Ascending aorta (tissue), 2 donors: ENCODE measurements at regions of chr10 and their contacts with region 1.

Region 1: GRCh38 chr10:27504007-27504807 is at the start of gene RAB18:
- DNase-seq: peak; percentile 92 to 99
- H3K4me3 ChIP-seq: peak within 1 kb of the TSS; percentile 73 to 96
- H3K27ac ChIP-seq: peak within 1 kb of the TSS; percentile 91 to 93
- H3K4me1 ChIP-seq: peaks cover 4 to 19% of the 10 kb centered on the region in 2 donors
- H3K27me3 ChIP-seq: no peaks in the 10 kb centered on the region
- CTCF ChIP-seq: peak in 1 of 3 experiments; percentile 7
- total RNA-seq, gene RAB18: 8.3 TPM

Region 2: DNA sequence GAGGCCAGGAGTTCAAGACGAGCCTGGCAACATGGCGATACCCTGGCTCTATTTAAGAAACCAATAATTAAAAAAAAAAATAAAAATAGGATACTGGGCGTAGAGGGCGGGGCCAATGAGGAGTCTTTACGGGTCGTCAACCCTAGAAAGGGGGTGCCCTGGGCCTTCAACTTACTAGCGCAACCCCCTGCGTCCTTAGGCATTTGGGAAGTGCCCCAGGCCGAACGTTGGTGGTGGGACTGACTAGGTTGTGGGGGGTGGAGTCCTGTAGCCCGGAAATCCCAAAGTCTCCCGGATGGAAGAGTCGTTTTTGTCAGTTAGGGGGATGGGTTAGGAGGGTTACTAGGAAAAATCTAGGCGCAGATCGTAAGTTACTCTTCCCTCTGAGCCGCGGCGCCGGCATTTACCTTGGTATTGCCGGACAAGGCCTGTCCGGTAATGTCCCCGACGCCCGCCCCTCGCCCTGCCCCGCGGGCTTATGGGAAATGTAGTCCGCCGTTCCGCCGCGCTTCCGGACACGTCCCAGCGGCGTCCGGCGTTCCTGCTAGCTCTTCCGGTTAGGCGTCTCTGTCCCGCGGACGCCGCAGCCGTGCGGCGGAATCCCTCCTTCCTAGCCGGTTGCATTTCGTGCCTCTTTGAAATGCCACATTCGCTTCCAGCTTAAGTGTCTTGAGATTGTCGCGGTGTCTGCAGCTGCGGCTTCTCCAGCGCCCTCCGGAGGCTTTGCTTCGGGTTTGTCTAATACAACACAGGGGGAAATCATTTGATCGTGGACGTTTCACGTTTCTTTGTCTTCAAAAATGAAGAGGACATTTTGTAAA is 262.3 kb before region 1 on chr10:
- intact Hi-C with region 1: loop called (anchors 2 kb)
- DNase-seq: peak; percentile 48 to 94
- H3K4me3 ChIP-seq: peak overlapping the region; percentile 79 to 86
- H3K27ac ChIP-seq: peak overlapping the region; percentile 96 to 98
- H3K4me1 ChIP-seq: peaks cover 0 to 18% of the 10 kb centered on the region in 2 donors
- H3K27me3 ChIP-seq: no peaks in the 10 kb centered on the region
- CTCF ChIP-seq: peak; percentile 26 to 50 (median 38)

Region 3: GRCh38 chr10:28532383-28533175 is 1028.4 kb after region 1 on chr10 and contains the start of gene WAC:
- intact Hi-C with region 1: loop called (anchors 1 kb)
- DNase-seq: peak; percentile 73 to 96
- H3K4me3 ChIP-seq: peak within 1 kb of the TSS; percentile 96 to 98
- H3K27ac ChIP-seq: peak within 1 kb of the TSS; percentile 99 to 100
- H3K4me1 ChIP-seq: peaks cover 0 to 19% of the 10 kb centered on the region in 2 donors
- H3K27me3 ChIP-seq: no peaks in the 10 kb centered on the region
- CTCF ChIP-seq: peak; percentile 22 to 31 (median 25)
- total RNA-seq, gene WAC: 30.5 TPM